AG04450 (cell line): ENCODE measurements at regions of chr20 and their contacts with region 1.

Region 1: GRCh38 chr20:44460795-44461141 is 14.9 kb upstream of the TTPAL start:
- DNase-seq: no peak
- H3K4me3 ChIP-seq: no peak overlapping the region
- H3K27ac ChIP-seq: no peak overlapping the region
- H3K27me3 ChIP-seq: peaks cover 16% of the 10 kb centered on the region
- CTCF ChIP-seq: peak; percentile 56

Region 2: DNA sequence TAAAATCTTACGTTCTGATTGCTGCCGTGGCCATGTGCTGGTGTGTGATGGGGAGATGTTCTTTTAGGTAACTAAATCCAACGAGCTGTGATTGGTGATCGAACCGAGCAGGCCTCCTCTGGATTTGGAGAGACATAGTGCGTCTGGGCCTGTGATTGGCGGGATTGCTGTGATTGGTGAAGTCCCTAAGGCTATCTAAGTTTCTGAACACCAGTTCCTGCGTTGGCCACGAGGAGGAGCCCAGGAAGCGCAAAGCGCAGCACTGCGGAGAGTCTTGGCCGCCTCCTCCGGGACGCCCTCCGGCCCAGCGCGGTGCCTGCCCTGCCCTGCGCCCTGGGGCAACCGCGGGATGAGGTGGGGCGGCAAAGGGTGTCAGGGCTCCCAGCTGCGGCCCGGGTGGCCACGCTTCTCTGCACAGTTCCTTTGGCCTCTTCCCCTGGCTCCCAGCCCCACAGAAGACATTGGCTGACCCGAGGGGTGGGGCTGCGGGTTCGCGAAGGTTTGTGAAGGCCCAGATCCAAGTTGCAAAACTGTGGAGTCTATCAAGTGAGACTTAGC is 72.2 kb before region 1 on chr20:
- CTCF ChIA-PET with region 1: interaction called, 29 read pairs
- POLR2A ChIA-PET with region 1: no interaction called
- DNase-seq: peak; percentile 21
- H3K4me3 ChIP-seq: no peak overlapping the region
- H3K27ac ChIP-seq: no peak overlapping the region
- H3K27me3 ChIP-seq: peaks cover 19% of the 10 kb centered on the region
- CTCF ChIP-seq: peak; percentile 81

Region 3: DNA sequence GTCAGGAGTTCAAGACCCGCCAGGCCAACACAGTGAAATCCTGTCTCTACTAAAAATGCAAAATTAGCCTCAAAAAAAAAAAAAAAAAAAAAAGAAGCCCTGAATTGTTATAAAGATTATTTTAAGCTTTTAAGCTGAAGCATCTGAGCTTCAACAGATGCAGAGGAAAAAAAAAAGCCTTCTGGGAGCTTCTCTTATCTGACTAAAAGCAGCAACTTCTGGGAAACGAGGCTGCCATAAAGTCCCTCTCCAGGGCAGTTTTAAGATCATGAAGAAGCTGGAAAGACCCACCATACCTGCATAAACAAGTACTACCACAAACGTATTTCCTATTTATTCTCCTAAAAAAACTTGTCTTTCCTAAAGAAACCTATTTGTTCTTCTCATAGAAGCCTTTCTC is 57.5 kb after region 1 on chr20:
- CTCF ChIA-PET with region 1: interaction called, 10 read pairs
- POLR2A ChIA-PET with region 1: no interaction called
- DNase-seq: no peak
- H3K4me3 ChIP-seq: no peak overlapping the region
- H3K27ac ChIP-seq: no peak overlapping the region
- H3K27me3 ChIP-seq: no peaks in the 10 kb centered on the region
- CTCF ChIP-seq: no peak